ENCODE measurements at regions of chr20 and their contacts with region 1.

Region 1: DNA sequence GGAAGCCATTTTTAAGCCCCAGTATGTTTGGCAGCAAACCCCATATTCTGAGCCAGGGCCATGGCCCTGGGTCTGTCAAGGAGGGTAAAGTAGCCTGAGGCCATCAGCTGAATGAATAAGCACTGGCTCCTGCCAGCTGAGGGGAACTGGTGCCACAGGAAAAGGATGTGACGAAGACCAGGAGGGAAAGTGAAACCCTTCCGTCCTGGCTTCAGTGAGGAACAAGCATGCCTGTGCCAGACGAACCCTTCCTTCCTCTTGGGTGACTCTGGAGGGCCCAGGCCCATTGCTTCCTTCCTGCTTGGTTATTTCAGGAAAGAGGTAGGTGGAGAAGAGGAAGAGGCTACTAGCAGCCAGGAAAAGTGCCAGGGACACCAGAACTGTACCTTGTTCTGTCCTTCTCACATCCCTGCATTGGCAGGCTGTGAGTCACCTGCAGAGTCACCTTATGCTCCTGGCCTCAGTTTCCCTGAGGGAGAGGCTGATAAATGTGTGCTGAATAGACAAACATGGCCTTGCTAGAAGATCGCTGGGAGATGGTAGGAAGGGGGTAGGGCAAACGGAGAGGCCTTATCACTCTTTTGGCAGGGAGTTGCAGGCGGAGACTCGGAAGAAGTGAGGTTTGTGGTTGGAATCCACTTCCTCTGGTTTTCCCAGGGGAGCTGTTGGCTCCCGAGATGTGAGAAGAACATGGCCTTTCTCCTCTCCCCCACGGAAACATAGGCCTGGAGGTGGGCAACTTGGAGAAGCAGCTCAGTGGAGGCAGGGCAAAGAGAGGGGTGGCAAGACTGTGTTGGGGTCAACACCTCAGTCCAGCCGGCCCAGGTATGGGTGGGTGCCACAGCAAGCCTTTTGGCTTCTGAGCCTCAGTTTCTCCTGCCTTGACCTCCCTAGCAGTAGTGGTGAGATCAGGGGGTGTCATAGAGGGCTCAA is 37.4 kb downstream of the COX4I2 start:
- DNase-seq: peak; percentile 86
- H3K4me3 Mint-ChIP-seq: peak overlapping the region; percentile 84
- H3K27ac Mint-ChIP-seq: peak overlapping the region; percentile 97
- H3K4me1 Mint-ChIP-seq: peaks cover 79% of the 10 kb centered on the region
- H3K27me3 Mint-ChIP-seq: no peaks in the 10 kb centered on the region

Region 2: GRCh38 chr20:31717478-31718201 is 42.5 kb after region 1 on chr20:
- CTCF ChIA-PET with region 1: interaction called, 103 read pairs
- intact Hi-C with region 1: loop called (anchors 1 kb)
- DNase-seq: peak; percentile 42
- H3K4me3 Mint-ChIP-seq: peak overlapping the region; percentile 95
- H3K27ac Mint-ChIP-seq: peak overlapping the region; percentile 99
- H3K4me1 Mint-ChIP-seq: peaks cover 53% of the 10 kb centered on the region
- H3K27me3 Mint-ChIP-seq: no peaks in the 10 kb centered on the region

Region 3: GRCh38 chr20:31845300-31845863 is 170.2 kb after region 1 on chr20 and contains the start of gene FOXS1:
- CTCF ChIA-PET with region 1: no interaction called
- intact Hi-C with region 1: no loop called
- DNase-seq: no peak
- H3K4me3 Mint-ChIP-seq: no peak within 1 kb of the TSS
- H3K27ac Mint-ChIP-seq: no peak within 1 kb of the TSS
- H3K4me1 Mint-ChIP-seq: no peaks in the 10 kb centered on the region
- H3K27me3 Mint-ChIP-seq: peaks cover 12% of the 10 kb centered on the region
- total RNA-seq, gene FOXS1: not detected